ENCODE measurements at regions of chr1 and their contacts with region 1.

Region 1: GRCh38 chr1:147242439-147243227 is at the start of gene CHD1L:
- DNase-seq: peak; percentile 97
- ATAC-seq: peak; percentile 98
- total RNA-seq, gene CHD1L: 9.0 to 12.3 TPM

Region 2: DNA sequence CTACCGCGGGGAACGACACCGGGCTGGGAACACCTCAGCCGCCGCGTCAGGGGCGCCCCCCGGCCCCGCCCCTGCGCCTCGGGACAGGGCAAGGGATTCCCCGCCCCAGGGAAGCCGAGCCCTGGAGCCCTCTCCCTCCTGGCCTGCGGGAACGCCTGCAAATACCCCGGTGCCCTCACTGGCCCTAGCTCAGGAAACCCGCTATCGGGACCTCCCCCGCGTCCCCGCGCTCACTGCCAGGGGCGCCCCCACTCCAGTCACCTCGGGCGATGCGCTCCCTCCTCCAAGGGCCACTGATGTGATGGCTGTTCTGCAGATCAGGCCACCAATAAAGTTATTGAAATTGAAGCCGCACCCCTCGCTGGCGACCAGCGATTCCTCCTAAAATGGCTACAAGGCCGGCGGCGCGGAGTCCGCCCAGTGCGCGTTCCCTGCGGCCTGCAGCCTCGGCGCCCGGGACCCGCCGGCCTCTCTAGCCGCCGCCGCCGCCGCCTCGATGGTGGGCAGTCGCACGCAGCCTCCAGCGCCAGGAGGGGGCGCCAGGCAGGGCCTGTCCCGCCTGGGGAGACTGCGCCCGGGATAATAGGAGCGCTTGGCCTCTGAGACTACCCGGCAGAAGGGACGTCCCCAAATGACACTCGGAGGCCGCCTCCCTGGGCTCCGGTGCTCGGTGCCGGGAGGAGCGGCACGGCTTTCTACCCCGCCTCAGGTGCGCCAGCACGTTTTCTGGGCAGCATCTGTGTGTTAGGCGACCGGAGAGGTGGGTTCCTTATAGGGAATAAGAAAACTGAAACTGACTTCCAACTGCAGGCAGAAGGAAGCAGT is 70.3 kb before region 1 on chr1 and contains the start of gene PRKAB2:
- intact Hi-C with region 1: loop called (anchors 1 to 5 kb)
- DNase-seq: peak; percentile 98
- ATAC-seq: peak; percentile 95 to 97
- total RNA-seq, gene PRKAB2: 12.2 to 22.8 TPM

Region 3: GRCh38 chr1:147292631-147293251 is 50.1 kb after region 1 on chr1:
- intact Hi-C with region 1: no loop called
- DNase-seq: no peak
- ATAC-seq: peak in 1 of 2 donors; percentile 74

Region 4: GRCh38 chr1:147700042-147701006 is 457.7 kb after region 1 on chr1:
- intact Hi-C with region 1: no loop called
- DNase-seq: peak; percentile 58
- ATAC-seq: peak; percentile 88 to 89

Measured in left cardiac atrium (tissue), 4 donors.